ENCODE measurements at regions of chr7 and their contacts with region 1.

Region 1: DNA sequence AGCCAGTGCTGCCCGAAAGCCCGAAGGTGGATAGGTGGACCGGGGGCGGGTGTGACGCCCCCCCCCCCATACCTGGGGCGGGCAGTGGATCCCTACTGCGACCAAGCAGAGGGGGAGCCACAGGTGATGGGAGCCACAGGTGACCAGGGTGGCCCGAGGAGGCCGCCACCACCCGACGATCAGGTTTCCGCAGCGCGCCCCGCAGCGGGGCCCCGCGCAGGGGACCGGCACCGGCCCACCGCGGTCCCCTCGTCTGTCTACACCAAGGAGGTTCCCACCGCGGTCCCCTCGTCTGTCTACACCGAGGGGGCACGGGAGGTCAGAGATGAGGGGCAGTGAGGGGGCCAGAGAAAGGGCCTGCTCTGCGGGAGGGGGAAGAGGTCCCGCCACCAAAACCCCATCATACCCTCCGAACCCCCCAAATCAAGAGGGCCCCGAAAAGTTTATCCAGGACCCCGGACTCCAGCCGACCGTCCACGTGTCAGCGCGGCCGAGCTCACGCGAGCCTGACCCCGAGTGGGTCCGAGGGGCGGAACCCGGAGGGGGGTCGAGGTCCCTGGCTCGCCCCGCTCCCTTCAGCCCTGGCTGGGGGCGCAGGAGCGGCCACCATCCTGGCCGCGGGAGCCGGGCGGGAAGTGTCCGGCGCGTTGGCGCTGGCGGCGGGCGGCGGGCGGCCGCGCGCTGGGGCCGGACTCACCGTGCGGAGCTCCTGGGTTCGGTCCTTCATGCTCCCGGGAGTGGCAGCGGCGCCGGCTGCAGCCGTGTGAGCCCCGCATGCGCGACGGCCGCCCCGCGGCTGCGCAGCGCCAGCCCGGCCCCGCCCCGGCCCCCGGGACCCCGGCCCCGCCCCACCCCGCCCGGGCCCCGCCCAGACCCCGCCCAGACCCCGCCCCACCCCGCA is at the start of gene STX1A:
- DNase-seq: peak; percentile 30 to 64 (median 56)
- H3K4me3 ChIP-seq: peak within 1 kb of the TSS; percentile 23 to 78 (median 41)
- H3K4me3 Mint-ChIP-seq: peak within 1 kb of the TSS; percentile 82 to 92
- H3K27ac ChIP-seq: no peak within 1 kb of the TSS
- H3K27ac Mint-ChIP-seq: peak within 1 kb of the TSS in 5 of 7 donors; percentile 30 to 91 (median 79)
- H3K4me1 ChIP-seq: peaks cover 35 to 47% of the 10 kb centered on the region in 2 donors
- H3K4me1 Mint-ChIP-seq: peaks cover 39% of the 10 kb centered on the region
- H3K27me3 ChIP-seq: peaks cover 31 to 86% of the 10 kb centered on the region in 2 donors
- H3K27me3 Mint-ChIP-seq: peaks cover 79 to 91% (median 82%) of the 10 kb centered on the region in 3 donors
- CTCF ChIP-seq: no peak
- polyA plus RNA-seq, gene STX1A: 0.27 to 2.7 (median 0.37) TPM

Region 2: DNA sequence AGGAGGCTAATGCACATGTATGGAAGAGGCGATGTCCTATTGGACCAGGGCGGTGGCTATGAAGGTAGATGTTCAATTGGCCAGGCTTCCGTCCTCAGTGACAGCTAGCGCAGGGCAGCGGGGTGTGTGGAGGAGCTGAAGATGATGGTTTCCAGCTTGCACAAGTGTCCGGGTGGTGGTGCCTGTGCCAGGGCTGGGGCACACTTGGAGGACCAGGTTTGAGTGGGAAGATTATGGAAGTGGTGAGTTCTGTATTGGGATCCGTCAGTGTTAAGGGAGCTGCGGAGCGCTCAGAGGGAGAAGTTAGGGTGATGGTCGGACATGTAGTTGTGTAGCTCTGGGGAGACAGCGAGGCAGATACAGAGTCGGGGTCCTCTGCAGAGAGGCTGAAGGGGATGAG is 132.2 kb before region 1 on chr7:
- intact Hi-C with region 1: loop called in 1 of 2 experiments (anchors 2 kb)
- DNase-seq: no peak
- H3K4me3 ChIP-seq: peak overlapping the region in 1 of 3 experiments; percentile 37
- H3K4me3 Mint-ChIP-seq: peak overlapping the region in 1 of 2 donors; percentile 51
- H3K27ac ChIP-seq: peak overlapping the region; percentile 74 to 75
- H3K27ac Mint-ChIP-seq: peak overlapping the region; percentile 90 to 98 (median 95)
- H3K4me1 ChIP-seq: peaks cover 60 to 61% of the 10 kb centered on the region in 2 donors
- H3K4me1 Mint-ChIP-seq: peaks cover 51% of the 10 kb centered on the region
- H3K27me3 ChIP-seq: no peaks in the 10 kb centered on the region
- H3K27me3 Mint-ChIP-seq: peaks cover 0 to 5% (median 0%) of the 10 kb centered on the region in 3 donors
- CTCF ChIP-seq: no peak

Region 3: DNA sequence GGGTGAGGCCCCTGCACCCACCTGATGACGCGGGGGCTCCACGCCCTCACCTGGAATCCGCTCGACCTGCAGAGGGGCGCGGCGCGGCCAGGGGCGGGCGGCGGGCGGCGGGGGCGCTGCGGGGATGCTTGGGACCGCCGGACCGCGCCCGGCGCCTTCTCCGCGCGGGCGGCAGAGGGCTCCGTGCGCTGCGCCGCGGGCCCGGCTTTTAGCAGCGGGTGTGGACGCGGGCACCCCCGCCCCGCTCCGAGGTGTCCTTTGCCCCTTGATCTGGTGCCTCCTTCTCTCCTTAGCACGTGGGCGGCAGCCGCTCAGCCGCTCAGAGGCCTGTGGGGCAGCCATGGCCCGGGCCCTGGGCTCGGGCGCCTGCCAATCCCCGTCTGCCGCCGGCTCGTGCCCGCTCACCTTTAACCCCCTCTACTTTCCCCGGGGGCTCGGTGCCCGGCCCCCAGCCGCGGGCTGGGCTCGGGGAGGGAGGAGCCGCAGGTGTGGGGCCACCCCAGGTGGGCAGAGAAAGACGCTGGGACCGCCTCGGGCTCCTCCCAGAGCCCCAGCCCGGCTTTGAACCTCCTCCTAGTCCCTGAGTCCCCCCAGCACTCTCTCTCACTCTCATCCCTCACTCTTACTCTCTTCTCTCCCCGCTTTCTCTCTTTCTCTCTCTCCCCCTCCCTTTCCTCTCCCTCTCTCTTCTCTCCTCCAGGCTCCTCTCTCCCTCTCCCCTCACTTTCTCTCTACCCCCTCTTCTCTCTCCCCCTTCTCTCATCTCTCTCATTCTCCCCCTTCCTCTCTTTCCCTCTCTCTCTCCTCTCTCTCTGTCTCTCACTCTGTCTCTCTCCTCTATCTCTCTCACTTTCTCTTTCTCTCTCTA is 71.2 kb before region 1 on chr7:
- intact Hi-C with region 1: no loop called
- DNase-seq: no peak
- H3K4me3 ChIP-seq: no peak overlapping the region
- H3K4me3 Mint-ChIP-seq: peak overlapping the region in 1 of 2 donors; percentile 86
- H3K27ac ChIP-seq: no peak overlapping the region
- H3K27ac Mint-ChIP-seq: no peak overlapping the region
- H3K4me1 ChIP-seq: peaks cover 3 to 8% of the 10 kb centered on the region in 2 donors
- H3K4me1 Mint-ChIP-seq: peaks cover 18% of the 10 kb centered on the region
- H3K27me3 ChIP-seq: peaks cover 31 to 73% of the 10 kb centered on the region in 2 donors
- H3K27me3 Mint-ChIP-seq: peaks cover 66 to 93% (median 76%) of the 10 kb centered on the region in 3 donors
- CTCF ChIP-seq: no peak

Region 4: GRCh38 chr7:73667344-73668102 is 51.6 kb before region 1 on chr7 and contains the start of gene VPS37D:
- intact Hi-C with region 1: loop called in 1 of 2 experiments (anchors 5 kb)
- DNase-seq: peak; percentile 82 to 86 (median 83)
- H3K4me3 ChIP-seq: peak within 1 kb of the TSS; percentile 8 to 63 (median 17)
- H3K4me3 Mint-ChIP-seq: peak within 1 kb of the TSS; percentile 69 to 76
- H3K27ac ChIP-seq: no peak within 1 kb of the TSS
- H3K27ac Mint-ChIP-seq: peak within 1 kb of the TSS in 1 of 7 donors; percentile 66
- H3K4me1 ChIP-seq: peaks cover 9 to 13% of the 10 kb centered on the region in 2 donors
- H3K4me1 Mint-ChIP-seq: peaks cover 12% of the 10 kb centered on the region
- H3K27me3 ChIP-seq: peaks cover 25 to 66% of the 10 kb centered on the region in 2 donors
- H3K27me3 Mint-ChIP-seq: peaks cover 66 to 91% (median 76%) of the 10 kb centered on the region in 3 donors
- CTCF ChIP-seq: peak; percentile 73
- polyA plus RNA-seq, gene VPS37D: not detected

Measured in CD14-positive monocyte (primary cell).